SK-N-SH (cell line): ENCODE measurements at regions of chr2 and their contacts with region 1.

Region 1: DNA sequence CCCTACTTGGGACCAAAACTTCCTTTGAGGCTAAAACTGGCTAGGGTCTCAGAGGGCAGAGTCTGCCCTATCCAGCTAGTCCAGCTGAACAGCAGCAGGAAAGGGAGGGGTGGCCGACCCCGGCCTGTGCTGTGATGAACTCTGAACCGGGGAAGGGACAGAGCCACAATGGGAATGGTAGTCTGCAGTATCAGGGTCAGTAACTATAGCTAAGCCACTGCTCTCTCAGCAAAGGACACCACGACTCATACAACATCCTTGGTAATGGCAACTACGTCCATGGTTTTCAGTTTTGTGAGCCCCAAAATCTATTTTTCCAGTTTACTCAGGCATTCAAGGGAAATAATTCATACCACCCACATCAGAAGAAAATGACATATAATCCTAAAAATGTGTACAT is 75.2 kb downstream of the NBAS start:
- DNase-seq: no peak
- H3K4me3 ChIP-seq: no peak overlapping the region
- H3K27ac ChIP-seq: no peak overlapping the region
- H3K4me1 ChIP-seq: no peaks in the 10 kb centered on the region
- H3K27me3 ChIP-seq: no peaks in the 10 kb centered on the region
- CTCF ChIP-seq: no peak
- EP300 ChIP-seq: no peak
- RAD21 ChIP-seq: no peak

Region 2: DNA sequence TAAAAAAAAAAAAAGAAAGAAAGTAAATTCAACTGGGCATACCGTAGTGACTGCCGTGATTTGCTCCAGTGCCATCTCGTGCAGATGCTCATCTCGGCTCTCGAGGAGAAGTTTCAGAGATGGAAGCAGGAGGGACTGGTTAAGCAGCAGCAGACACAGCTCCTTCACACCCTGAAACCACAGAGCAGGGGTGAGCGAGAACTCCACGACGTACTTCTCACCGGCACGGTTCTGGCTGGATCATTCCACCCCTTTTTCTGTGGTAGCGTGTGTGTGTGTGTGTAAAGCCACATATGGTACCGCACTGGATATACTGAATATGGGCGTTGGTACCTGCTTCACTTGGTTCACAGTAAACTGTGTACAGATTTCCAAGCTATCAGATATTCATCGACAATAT is 307.0 kb before region 1 on chr2:
- CTCF ChIA-PET with region 1: no interaction called
- POLR2A ChIA-PET with region 1: no interaction called
- DNase-seq: no peak
- H3K4me3 ChIP-seq: no peak overlapping the region
- H3K27ac ChIP-seq: no peak overlapping the region
- H3K4me1 ChIP-seq: peaks cover 0 to 13% of the 10 kb centered on the region in 2 experiments; a peak in 2 of 4 replicates
- H3K27me3 ChIP-seq: no peaks in the 10 kb centered on the region
- CTCF ChIP-seq: no peak
- EP300 ChIP-seq: no peak
- RAD21 ChIP-seq: no peak

Region 3: DNA sequence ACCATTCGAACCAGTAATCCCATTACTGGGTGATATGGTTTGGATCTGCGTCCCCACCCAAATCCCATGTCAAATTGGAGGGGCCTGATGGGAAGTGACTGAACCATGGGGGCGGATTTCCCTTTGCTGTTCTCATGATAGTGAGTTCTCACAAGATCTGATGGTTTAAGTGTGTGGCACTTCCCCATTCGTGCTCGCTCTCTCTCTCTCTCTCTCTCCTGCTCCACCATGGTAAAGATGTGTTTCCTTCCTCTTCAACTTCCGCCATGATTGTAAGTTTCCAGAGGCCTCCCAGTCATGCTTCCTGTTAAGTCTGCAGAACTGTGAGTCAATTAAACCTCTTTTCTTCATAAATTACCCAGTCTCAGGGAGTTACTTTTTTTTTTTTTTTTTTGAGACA is 12.6 kb after region 1 on chr2:
- CTCF ChIA-PET with region 1: interaction called, 13 read pairs
- POLR2A ChIA-PET with region 1: no interaction called
- DNase-seq: no peak
- H3K4me3 ChIP-seq: no peak overlapping the region
- H3K27ac ChIP-seq: no peak overlapping the region
- H3K4me1 ChIP-seq: no peaks in the 10 kb centered on the region
- H3K27me3 ChIP-seq: no peaks in the 10 kb centered on the region
- CTCF ChIP-seq: no peak
- EP300 ChIP-seq: no peak
- RAD21 ChIP-seq: no peak

Region 4: GRCh38 chr2:15539999-15540398 is 54.0 kb after region 1 on chr2:
- CTCF ChIA-PET with region 1: no interaction called
- POLR2A ChIA-PET with region 1: no interaction called
- DNase-seq: no peak
- H3K4me3 ChIP-seq: no peak overlapping the region
- H3K27ac ChIP-seq: no peak overlapping the region
- H3K4me1 ChIP-seq: peaks cover 0 to 4% of the 10 kb centered on the region in 2 experiments; a peak in 1 of 4 replicates
- H3K27me3 ChIP-seq: no peaks in the 10 kb centered on the region
- CTCF ChIP-seq: no peak
- EP300 ChIP-seq: no peak
- RAD21 ChIP-seq: no peak